ENCODE measurements at regions of chr20 and their contacts with region 1.

Region 1: GRCh38 chr20:39112178-39112743 is 150.1 kb downstream of the DHX35 start:
- DNase-seq: no peak
- ATAC-seq: peak; percentile 93
- H3K4me3 ChIP-seq: no peak overlapping the region
- H3K27ac ChIP-seq: no peak overlapping the region
- H3K4me1 ChIP-seq: no peaks in the 10 kb centered on the region; the same call in 1 of the 2 replicates
- H3K27me3 ChIP-seq: peaks cover 6% of the 10 kb centered on the region
- CTCF ChIP-seq: peak; percentile 89

Region 2: GRCh38 chr20:39142407-39143096 is 30.3 kb after region 1 on chr20:
- CTCF ChIA-PET with region 1: no interaction called
- POLR2A ChIA-PET with region 1: no interaction called
- in situ Hi-C with region 1: no loop called
- intact Hi-C with region 1: no loop called
- DNase-seq: no peak
- ATAC-seq: no peak
- H3K4me3 ChIP-seq: no peak overlapping the region
- H3K27ac ChIP-seq: no peak overlapping the region
- H3K4me1 ChIP-seq: no peaks in the 10 kb centered on the region
- H3K27me3 ChIP-seq: peaks cover 11% of the 10 kb centered on the region
- CTCF ChIP-seq: no peak

Region 3: DNA sequence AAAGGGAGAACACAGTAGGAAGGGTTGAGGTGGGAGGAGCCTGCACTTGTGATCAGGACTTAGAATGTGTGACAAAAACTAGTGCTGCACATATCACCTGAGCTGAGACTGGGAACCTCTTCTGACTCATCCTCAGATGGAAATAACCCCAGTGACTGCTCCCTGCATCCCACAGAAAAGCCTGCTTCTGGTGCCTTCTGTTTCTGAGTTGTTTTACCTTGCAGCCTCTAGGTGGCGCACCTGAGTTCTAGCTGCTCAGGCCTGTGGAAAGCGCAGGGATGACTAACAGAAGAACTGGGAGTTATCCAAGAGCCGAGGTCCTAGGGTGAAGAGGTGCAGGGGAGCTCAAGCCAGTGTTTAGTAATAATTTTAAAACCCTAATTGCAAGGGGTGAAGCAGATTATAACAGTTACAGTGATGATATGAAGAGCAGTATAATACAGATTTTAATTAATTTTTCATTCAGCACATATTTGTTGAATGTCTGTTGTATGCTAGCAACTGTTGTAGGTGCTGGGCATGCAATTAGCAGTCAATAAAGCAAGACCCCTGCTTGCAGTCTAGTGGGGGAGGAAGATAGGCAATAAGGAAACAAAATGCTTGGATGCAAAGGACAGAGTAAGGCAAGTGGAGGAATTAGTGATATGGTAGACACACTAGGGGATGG is 152.4 kb after region 1 on chr20:
- CTCF ChIA-PET with region 1: interaction called, 3 read pairs
- POLR2A ChIA-PET with region 1: no interaction called
- in situ Hi-C with region 1: no loop called
- intact Hi-C with region 1: loop called (anchors 5 kb)
- DNase-seq: peak; percentile 52
- ATAC-seq: peak; percentile 81
- H3K4me3 ChIP-seq: no peak overlapping the region
- H3K27ac ChIP-seq: no peak overlapping the region
- H3K4me1 ChIP-seq: no peaks in the 10 kb centered on the region
- H3K27me3 ChIP-seq: no peaks in the 10 kb centered on the region
- CTCF ChIP-seq: peak; percentile 96

Region 4: DNA sequence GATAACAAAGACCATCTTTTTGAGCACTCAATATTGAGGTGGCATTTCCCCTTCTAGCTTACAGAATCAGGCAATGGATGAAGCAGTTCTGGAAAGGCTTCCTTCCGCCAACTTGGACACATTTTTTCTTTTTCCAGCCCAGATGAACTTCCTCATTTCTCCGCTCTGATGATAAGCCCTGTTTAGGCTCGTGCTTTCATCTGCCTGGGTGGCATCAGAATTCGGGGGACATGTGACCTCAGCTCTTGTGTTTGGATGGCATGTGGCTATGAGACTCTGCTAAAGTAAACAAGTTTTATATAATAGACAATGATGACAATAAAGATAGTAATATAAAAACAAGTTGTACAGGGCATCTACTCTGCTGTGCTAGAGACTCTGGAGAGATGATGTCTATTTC is 646.6 kb after region 1 on chr20:
- CTCF ChIA-PET with region 1: no interaction called
- POLR2A ChIA-PET with region 1: no interaction called
- in situ Hi-C with region 1: no loop called
- intact Hi-C with region 1: no loop called
- DNase-seq: no peak
- ATAC-seq: no peak
- H3K4me3 ChIP-seq: no peak overlapping the region
- H3K27ac ChIP-seq: no peak overlapping the region
- H3K4me1 ChIP-seq: no peaks in the 10 kb centered on the region
- H3K27me3 ChIP-seq: no peaks in the 10 kb centered on the region
- CTCF ChIP-seq: no peak

Region 5: GRCh38 chr20:40956542-40957264 is 1844.4 kb after region 1 on chr20:
- CTCF ChIA-PET with region 1: interaction called, 15 read pairs
- POLR2A ChIA-PET with region 1: no interaction called
- in situ Hi-C with region 1: no loop called
- intact Hi-C with region 1: no loop called
- DNase-seq: no peak
- ATAC-seq: no peak
- H3K4me3 ChIP-seq: no peak overlapping the region
- H3K27ac ChIP-seq: no peak overlapping the region
- H3K4me1 ChIP-seq: no peaks in the 10 kb centered on the region
- H3K27me3 ChIP-seq: no peaks in the 10 kb centered on the region
- CTCF ChIP-seq: no peak

Region 6: GRCh38 chr20:40962730-40963504 is 1850.7 kb after region 1 on chr20:
- CTCF ChIA-PET with region 1: interaction called, 15 read pairs
- POLR2A ChIA-PET with region 1: no interaction called
- in situ Hi-C with region 1: no loop called
- intact Hi-C with region 1: loop called (anchors 2 kb)
- DNase-seq: peak; percentile 25
- ATAC-seq: peak; percentile 96
- H3K4me3 ChIP-seq: no peak overlapping the region
- H3K27ac ChIP-seq: no peak overlapping the region
- H3K4me1 ChIP-seq: no peaks in the 10 kb centered on the region; the same call in 1 of the 2 replicates
- H3K27me3 ChIP-seq: no peaks in the 10 kb centered on the region
- CTCF ChIP-seq: peak; percentile 96

Measured in Panc1 (cell line).